Activated CD8-positive, alpha-beta T cell treated with anti-CD3 and anti-CD28 coated beads for 36 hours (primary cell): ENCODE measurements at regions of chr3 and their contacts with region 1.

Region 1: DNA sequence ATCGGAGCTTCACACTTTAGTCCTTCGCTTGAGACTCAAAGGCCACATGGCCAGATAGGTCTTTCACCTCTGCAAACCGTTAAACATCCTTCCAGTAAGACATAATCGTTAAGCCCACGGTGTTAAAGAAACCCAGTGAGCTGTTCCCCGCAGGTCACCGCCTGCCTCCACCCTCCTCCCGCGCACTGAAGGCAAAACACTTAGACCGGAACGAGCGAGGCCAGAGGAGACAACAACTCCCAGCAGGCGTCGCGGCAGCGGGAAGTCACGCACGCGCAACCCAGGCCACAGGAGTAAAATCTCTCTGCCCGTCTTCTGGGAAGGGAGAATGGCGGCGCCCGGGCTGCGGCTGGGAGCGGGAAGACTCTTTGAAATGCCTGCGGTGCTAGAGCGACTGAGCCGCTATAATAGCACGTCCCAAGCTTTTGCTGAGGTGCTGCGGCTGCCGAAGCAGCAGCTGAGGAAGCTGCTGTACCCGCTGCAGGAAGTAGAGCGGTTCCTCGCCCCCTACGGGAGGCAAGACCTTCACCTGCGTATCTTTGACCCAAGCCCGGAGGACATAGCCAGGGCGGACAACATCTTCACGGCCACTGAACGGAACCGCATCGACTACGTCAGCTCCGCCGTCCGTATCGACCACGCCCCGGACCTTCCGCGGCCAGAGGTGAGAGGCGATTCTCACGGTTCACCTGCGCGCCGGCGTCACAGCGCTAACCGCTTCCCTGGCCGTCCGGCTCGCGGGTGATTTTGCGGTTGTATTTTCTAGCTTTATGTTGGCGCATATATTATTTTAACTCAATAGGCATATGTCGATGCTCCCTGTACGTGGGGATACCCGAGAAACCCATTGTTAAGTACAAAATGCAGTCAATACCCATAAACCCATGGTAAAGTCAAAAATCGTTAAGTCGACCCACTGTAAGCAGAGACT is at the start of gene GTPBP8:
- DNase-seq: peak; percentile 92
- ATAC-seq: peak; percentile 94
- H3K4me3 Mint-ChIP-seq: peak within 1 kb of the TSS; percentile 89
- H3K27ac Mint-ChIP-seq: peak within 1 kb of the TSS; percentile 97
- H3K4me1 Mint-ChIP-seq: peaks cover 57% of the 10 kb centered on the region
- H3K27me3 Mint-ChIP-seq: no peaks in the 10 kb centered on the region
- CTCF ChIP-seq: no peak
- total RNA-seq, gene GTPBP8: 24.7 to 28.0 TPM

Region 2: GRCh38 chr3:112873632-112874031 is 117.3 kb before region 1 on chr3:
- CTCF ChIA-PET with region 1: no interaction called
- POLR2A ChIA-PET with region 1: no interaction called
- intact Hi-C with region 1: no loop called
- DNase-seq: no peak
- ATAC-seq: no peak
- H3K4me3 Mint-ChIP-seq: no peak overlapping the region
- H3K27ac Mint-ChIP-seq: no peak overlapping the region
- H3K4me1 Mint-ChIP-seq: no peaks in the 10 kb centered on the region
- H3K27me3 Mint-ChIP-seq: no peaks in the 10 kb centered on the region
- CTCF ChIP-seq: no peak

Region 3: DNA sequence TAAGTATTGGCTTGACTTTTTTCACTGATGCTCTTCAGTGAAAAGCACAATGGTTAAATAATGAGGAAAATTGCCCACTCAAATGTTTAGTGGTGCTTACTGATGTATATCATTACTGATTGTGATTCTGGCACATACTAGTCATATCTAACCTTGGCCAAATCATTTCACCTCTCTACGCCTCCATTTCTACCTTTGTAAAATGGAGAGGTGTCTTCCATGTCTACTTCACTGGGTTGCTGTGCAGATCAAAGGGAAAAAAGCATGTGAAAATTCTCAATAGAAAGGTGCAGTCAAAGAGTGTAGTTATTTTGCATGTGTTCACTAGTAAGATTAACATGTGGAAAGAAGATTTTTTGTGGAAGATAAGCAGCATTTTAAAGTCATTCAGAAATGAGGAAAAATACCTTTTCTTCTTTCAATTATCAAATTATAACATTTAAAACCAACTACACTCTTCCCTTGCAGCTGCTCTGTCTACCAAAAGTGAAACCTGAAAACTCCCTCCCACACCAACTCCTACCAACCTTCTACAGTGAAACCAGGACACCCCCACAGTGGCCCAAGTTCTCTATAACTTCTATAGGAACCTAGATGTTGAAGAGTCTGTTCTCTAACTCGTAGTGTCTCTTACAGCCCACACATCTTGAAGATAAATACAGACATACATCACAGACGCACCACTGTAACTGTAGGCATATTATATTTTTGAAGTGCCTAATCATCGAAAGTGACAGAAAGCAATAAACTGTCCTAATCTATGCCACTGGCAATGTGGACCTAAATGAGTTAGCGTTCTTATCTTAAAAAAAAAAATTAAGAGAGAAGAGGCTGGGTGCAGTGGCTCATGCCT is 17.4 kb before region 1 on chr3:
- CTCF ChIA-PET with region 1: interaction called, 55 read pairs
- POLR2A ChIA-PET with region 1: interaction called, 20 read pairs
- intact Hi-C with region 1: no loop called
- DNase-seq: peak; percentile 77
- ATAC-seq: peak; percentile 81
- H3K4me3 Mint-ChIP-seq: peak overlapping the region; percentile 73
- H3K27ac Mint-ChIP-seq: peak overlapping the region; percentile 82
- H3K4me1 Mint-ChIP-seq: peaks cover 85% of the 10 kb centered on the region
- H3K27me3 Mint-ChIP-seq: no peaks in the 10 kb centered on the region
- CTCF ChIP-seq: no peak

Region 4: GRCh38 chr3:112979240-112979832 is 11.6 kb before region 1 on chr3:
- CTCF ChIA-PET with region 1: interaction called, 55 read pairs
- POLR2A ChIA-PET with region 1: interaction called, 20 read pairs
- intact Hi-C with region 1: no loop called
- DNase-seq: no peak
- ATAC-seq: peak; percentile 38
- H3K4me3 Mint-ChIP-seq: no peak overlapping the region
- H3K27ac Mint-ChIP-seq: no peak overlapping the region
- H3K4me1 Mint-ChIP-seq: peaks cover 60% of the 10 kb centered on the region
- H3K27me3 Mint-ChIP-seq: no peaks in the 10 kb centered on the region
- CTCF ChIP-seq: peak; percentile 88

Region 5: DNA sequence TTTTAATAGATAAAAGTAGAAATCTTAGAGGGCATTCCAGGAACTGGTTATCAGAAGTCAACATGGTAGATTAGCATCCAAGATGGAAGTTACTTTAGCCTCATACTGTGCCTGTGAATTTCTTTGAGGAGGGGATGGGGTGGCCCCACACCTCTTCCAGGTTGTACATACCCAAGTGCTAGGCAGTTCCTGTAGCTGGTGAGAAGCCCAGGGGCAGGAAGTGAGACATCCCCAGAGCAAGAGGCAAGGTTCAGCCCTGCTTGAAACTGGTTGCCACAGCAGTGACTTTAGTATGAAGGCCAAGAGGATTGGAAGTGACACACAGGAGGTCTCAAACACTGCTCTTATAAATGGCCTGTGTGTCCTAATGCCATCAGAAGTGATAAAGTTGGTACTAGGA is 11.7 kb after region 1 on chr3:
- CTCF ChIA-PET with region 1: interaction called, 18 read pairs
- POLR2A ChIA-PET with region 1: interaction called, 11 read pairs
- intact Hi-C with region 1: no loop called
- DNase-seq: peak; percentile 73
- ATAC-seq: peak; percentile 73
- H3K4me3 Mint-ChIP-seq: no peak overlapping the region
- H3K27ac Mint-ChIP-seq: peak overlapping the region; percentile 79
- H3K4me1 Mint-ChIP-seq: peaks cover 65% of the 10 kb centered on the region
- H3K27me3 Mint-ChIP-seq: no peaks in the 10 kb centered on the region
- CTCF ChIP-seq: no peak

Region 6: DNA sequence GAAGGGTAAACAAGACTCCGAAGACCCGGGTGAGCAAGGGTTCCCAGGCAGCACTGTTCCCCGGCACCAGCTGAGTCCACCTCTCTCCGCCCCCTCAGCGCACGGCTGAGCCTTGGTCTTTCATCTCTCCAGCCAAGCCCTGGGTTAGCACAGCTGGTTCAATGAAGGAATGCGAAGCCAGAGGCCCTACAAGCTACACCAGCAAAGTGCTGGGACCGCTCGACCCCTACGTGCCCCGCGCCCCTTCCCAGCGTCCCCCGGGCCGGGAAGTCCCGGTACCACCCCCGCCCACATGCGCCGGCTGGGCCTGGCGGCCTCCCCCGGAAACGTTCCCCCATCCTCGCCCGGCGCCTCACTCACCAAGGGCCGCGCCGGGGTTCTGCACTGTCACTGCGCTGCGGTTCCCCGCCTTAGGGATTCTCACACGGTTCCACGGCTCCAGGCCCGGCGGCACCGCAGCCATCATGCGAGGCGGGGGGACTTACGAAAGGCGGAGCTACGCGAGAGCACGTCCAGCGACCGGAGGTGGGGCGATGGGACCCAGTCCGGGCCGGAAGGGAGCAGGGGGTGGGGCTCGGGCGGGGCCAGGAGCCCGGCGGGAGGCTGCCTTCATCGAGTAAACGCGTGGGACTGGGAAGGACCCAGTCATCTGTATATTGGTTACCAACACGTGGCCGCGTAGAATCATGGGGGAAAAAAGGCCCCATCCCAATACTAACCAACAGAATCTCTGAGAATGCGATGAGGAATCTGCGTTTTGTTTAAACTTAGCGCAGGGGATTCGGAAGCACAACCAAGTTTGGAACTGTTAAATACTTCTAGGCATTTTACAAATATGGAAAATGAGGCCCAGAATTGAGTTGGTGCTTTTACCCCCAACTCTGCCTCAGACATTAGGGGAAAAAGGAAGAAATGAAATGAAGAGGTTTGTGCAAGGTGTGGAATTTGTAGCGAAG is 28.5 kb after region 1 on chr3:
- CTCF ChIA-PET with region 1: no interaction called
- POLR2A ChIA-PET with region 1: interaction called, 12 read pairs
- intact Hi-C with region 1: no loop called
- DNase-seq: peak; percentile 94
- ATAC-seq: peak; percentile 95
- H3K4me3 Mint-ChIP-seq: peak overlapping the region; percentile 83
- H3K27ac Mint-ChIP-seq: peak overlapping the region; percentile 92
- H3K4me1 Mint-ChIP-seq: peaks cover 56% of the 10 kb centered on the region
- H3K27me3 Mint-ChIP-seq: no peaks in the 10 kb centered on the region
- CTCF ChIP-seq: no peak